ENCODE measurements at regions of chrX and their contacts with region 1.

Region 1: GRCh38 chrX:134520860-134521390 is 61.0 kb downstream of the HPRT1 start:
- DNase-seq: peak; percentile 25
- H3K4me3 Mint-ChIP-seq: no peak overlapping the region
- H3K27ac Mint-ChIP-seq: no peak overlapping the region
- H3K4me1 Mint-ChIP-seq: peaks cover 6% of the 10 kb centered on the region
- H3K27me3 Mint-ChIP-seq: no peaks in the 10 kb centered on the region

Region 2: DNA sequence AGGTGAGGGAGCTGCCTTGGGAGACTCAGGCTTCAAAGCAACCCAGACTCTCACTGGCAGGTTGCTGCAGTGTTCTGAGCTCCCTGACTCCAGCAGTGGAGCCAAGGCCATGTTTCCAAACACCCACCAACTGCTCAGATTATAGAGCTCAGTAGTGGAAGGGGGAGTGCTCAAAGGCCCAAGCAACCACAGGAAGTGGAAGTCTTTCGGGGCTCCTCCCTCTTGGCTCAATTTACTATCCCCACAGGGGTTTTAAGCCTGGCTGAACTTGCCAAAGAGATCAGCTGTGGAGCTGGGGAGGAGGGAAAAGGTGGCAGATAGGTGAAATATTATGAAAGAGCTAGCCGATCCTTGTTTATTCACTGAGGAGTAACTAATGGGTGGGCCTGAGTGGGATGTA is 21.6 kb after region 1 on chrX:
- CTCF ChIA-PET with region 1: no interaction called
- DNase-seq: no peak
- H3K4me3 Mint-ChIP-seq: no peak overlapping the region
- H3K27ac Mint-ChIP-seq: no peak overlapping the region
- H3K4me1 Mint-ChIP-seq: peaks cover 14% of the 10 kb centered on the region
- H3K27me3 Mint-ChIP-seq: peaks cover 35% of the 10 kb centered on the region

Region 3: DNA sequence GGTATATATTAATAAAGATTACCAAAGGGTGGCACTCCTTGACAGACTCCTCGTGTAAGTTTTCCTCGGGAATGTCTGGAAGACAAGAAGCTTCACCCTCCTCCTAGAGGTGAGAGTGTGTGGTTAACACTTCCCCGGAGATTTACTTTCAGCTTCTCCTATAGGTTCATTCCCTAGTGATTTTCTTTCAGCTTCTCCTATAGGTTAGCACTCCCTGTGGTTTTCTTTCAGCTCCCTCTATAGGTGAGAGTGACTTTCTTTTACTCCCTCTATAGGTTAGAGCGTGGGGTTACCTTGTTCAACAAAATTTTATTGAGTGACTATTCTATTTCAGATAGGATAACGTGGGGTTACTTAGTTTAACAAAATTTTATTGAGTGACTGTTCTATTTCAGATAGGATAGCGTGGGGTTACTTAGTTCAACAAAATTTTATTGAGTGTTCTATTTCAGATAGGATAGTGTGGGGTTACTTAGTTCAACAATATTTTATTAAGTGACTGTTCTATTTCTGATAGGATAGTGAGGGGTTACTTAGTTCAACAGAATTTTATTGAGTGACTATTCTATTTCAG is 243.4 kb after region 1 on chrX:
- CTCF ChIA-PET with region 1: interaction called, 16 read pairs
- DNase-seq: no peak
- H3K4me3 Mint-ChIP-seq: no peak overlapping the region
- H3K27ac Mint-ChIP-seq: no peak overlapping the region
- H3K4me1 Mint-ChIP-seq: no peaks in the 10 kb centered on the region
- H3K27me3 Mint-ChIP-seq: no peaks in the 10 kb centered on the region